Activated B cell treated with CpG ODN at 0.5 μM for 24 hours (primary cell): ENCODE measurements at regions of chr2 and their contacts with region 1.

Region 1: DNA sequence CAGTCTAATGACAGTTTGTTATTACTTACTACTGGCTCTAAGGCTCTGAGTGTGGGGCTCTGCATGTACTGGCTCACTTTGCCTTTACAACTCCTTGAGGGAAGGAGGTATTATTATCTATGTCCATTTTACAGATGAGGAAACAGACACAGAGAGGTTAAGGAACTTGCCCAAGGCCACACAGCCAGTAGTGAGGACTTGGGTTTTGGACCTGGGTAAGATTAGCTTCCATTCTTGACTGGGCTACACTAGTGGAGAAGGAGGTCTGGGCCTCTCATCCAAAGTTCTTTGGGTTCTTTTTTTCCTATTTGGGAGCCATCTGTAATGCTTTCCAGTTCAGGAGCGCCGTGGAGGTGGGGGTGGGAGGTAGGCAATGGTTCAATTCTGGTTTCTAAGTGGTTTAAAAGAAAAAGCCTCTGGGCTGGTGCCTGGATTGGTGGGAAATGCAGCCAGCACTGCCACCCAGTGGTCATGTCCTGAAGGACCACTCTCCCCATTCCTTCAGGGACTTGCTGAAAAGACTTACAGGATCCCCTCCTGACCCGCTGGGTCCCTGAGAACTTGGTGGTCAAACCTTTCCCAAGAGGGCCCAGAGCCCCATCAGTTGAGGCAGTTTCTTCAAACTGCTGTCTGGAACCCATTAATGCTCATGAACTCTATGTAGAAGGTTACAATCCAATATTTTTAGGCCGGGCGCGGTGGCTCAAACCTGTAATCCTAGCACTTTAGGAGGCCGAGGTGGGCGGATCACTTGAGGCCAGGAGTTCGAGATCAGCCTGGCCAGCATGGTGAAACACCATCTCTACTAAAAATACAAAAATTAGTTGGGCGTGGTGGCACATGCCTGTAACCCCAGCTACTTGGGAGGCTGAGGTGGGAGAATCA is 38.6 kb upstream of the NOTO start:
- DNase-seq: peak; percentile 56
- ATAC-seq: peak; percentile 94
- H3K4me3 Mint-ChIP-seq: no peak overlapping the region
- H3K27ac Mint-ChIP-seq: no peak overlapping the region
- H3K4me1 Mint-ChIP-seq: no peaks in the 10 kb centered on the region
- H3K27me3 Mint-ChIP-seq: peaks cover 11% of the 10 kb centered on the region
- CTCF ChIP-seq: peak; percentile 30

Region 2: DNA sequence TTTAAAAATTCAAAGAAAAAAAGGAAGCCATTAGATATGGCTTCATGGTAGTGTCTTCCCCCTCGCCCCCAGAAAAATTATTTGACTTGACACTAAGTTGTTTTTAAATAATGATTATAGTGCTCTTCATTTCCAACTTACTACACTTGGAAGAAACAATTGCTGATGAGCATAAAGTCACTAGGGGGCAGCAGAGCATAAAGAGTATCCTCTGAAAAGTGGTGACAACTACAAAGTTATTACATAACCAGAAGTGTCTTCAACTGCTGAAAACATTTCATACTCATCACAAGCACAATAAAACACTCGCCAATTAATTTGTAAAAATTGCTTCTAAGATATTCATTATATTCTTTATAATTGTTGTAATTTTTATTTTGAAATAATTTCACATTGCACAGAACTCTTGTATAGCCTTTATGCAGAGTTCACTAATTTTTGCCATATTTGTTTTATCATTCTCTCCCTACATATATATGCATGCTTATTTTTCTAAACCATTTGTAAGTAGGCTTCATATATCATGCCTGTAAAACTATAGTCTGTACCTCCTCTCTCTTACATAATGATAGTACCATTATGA is 392.8 kb before region 1 on chr2:
- CTCF ChIA-PET with region 1: interaction called, 3 read pairs
- POLR2A ChIA-PET with region 1: no interaction called
- intact Hi-C with region 1: loop called (anchors 5 kb)
- DNase-seq: no peak
- ATAC-seq: peak; percentile 52
- H3K4me3 Mint-ChIP-seq: no peak overlapping the region
- H3K27ac Mint-ChIP-seq: no peak overlapping the region
- H3K4me1 Mint-ChIP-seq: no peaks in the 10 kb centered on the region
- H3K27me3 Mint-ChIP-seq: no peaks in the 10 kb centered on the region
- CTCF ChIP-seq: peak; percentile 98

Region 3: DNA sequence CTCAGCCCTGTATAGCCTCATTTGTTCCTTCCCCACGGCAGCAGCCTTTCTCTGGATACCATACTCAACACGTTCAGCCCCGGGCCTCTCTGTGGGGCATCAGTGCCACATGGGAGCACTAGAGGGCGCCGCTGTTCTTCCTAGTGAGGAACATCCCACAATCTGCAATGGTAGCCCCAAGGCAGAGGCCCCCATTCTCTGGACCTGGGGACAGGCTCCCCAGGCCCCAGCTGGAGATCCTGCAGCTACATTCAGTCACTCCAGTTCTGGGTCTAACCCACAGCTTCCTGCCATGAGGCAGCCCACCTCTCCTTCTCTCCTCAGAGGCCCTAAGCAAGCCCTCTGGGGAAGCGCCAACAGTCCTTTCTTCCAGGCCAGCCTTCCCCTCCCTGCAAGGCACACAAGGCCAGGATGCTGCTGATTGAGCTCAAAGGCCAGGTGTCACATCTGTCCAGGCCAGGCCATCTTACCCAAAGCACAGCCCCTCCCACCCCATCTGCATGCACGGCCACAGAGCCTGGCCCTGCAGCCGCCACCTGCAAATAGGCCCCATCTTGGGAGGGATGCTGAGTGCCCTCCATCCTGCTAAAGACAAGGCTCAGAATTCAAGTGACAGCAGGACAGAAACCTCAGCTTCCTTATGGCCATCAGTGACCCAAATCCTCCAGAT is 77.9 kb before region 1 on chr2:
- CTCF ChIA-PET with region 1: interaction called, 7 read pairs
- POLR2A ChIA-PET with region 1: no interaction called
- intact Hi-C with region 1: loop called (anchors 1 kb)
- DNase-seq: peak; percentile 62
- ATAC-seq: peak; percentile 96
- H3K4me3 Mint-ChIP-seq: no peak overlapping the region
- H3K27ac Mint-ChIP-seq: no peak overlapping the region
- H3K4me1 Mint-ChIP-seq: no peaks in the 10 kb centered on the region
- H3K27me3 Mint-ChIP-seq: peaks cover 3% of the 10 kb centered on the region
- CTCF ChIP-seq: no peak

Region 4: GRCh38 chr2:73746015-73746876 is 582.5 kb after region 1 on chr2:
- CTCF ChIA-PET with region 1: no interaction called
- POLR2A ChIA-PET with region 1: no interaction called
- intact Hi-C with region 1: no loop called
- DNase-seq: no peak
- ATAC-seq: no peak
- H3K4me3 Mint-ChIP-seq: no peak overlapping the region
- H3K27ac Mint-ChIP-seq: no peak overlapping the region
- H3K4me1 Mint-ChIP-seq: no peaks in the 10 kb centered on the region
- H3K27me3 Mint-ChIP-seq: no peaks in the 10 kb centered on the region
- CTCF ChIP-seq: no peak